SK-N-SH (cell line): ENCODE measurements at regions of chr6 and their contacts with region 1.

Region 1: DNA sequence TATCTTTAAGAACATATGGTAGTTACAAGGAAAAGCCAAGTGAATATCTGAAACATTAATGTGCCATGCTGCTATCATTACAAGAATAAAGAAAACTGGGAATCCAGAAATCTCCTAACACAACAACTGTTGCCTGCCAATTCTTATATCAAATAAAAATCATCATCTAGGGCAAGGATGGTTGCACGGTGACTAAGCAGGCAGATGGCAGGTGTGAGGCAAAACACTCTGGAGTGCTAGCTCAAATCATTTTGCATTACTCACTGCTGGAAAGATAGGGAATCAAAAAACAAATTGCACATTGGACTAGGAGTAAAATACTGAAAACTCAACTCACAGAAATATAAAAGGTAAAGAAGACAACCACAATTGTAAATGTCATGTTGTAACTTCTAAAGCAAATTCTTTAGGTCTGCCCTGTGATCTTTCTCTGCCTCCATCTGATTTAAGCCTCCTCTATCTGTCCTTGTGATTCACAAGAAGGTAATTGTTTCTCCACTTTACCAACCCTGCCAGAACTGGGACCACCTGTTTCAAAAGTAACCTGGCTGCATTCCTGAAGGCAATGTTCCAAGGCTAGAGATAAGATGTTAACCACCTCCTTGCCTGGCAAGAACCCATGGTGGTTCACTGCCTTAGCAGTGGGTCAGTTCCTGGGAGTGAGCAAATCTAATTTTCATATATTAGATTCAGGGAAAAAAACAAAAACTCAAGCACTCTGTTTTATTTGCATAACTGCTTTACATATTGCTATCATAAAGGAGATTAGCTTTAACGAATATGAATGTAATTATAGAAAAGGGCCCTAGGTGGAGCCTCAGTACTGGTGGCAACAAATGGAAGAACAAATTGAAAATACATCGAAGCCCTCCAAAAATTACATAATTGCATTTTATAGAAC is 33.1 kb upstream of the LCA5 start:
- DNase-seq: peak; percentile 54
- H3K4me3 ChIP-seq: peak overlapping the region in 1 of 2 experiments; percentile 27; a peak in 2 of 4 replicates
- H3K27ac ChIP-seq: peak overlapping the region in 1 of 2 experiments; percentile 43; a peak in 1 of 4 replicates
- H3K4me1 ChIP-seq: peaks cover 6 to 9% of the 10 kb centered on the region in 2 experiments; a peak in 3 of 4 replicates
- H3K27me3 ChIP-seq: no peaks in the 10 kb centered on the region
- CTCF ChIP-seq: peak; percentile 79
- EP300 ChIP-seq: no peak
- RAD21 ChIP-seq: peak; percentile 91

Region 2: DNA sequence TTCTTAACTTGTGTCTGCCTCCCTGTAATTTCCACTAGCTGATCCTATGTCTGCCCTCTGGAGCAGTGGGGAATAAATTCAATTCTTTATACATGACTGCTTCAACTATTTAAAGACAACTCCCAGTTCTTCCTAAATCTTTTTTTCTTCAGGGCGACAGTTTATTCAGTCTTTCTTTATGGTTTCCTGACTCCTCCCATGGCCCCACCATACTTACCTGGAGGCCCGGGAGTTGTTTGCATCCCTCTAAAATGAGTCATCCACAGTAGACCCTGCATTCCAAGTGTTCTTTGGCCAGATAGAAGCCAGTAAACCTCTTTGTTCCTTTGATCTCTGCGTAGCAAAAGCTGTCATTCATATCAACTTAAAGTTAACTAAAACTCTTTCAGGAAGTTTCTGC is 106.7 kb before region 1 on chr6:
- CTCF ChIA-PET with region 1: no interaction called
- POLR2A ChIA-PET with region 1: no interaction called
- DNase-seq: no peak
- H3K4me3 ChIP-seq: no peak overlapping the region
- H3K27ac ChIP-seq: no peak overlapping the region
- H3K4me1 ChIP-seq: peaks cover 0 to 14% of the 10 kb centered on the region in 2 experiments
- H3K27me3 ChIP-seq: no peaks in the 10 kb centered on the region
- CTCF ChIP-seq: no peak
- EP300 ChIP-seq: no peak
- RAD21 ChIP-seq: no peak

Region 3: GRCh38 chr6:79600812-79601609 is 30.6 kb after region 1 on chr6:
- CTCF ChIA-PET with region 1: interaction called, 17 read pairs
- POLR2A ChIA-PET with region 1: no interaction called
- DNase-seq: no peak
- H3K4me3 ChIP-seq: no peak overlapping the region
- H3K27ac ChIP-seq: no peak overlapping the region
- H3K4me1 ChIP-seq: peaks cover 0 to 1% of the 10 kb centered on the region in 2 experiments; a peak in 2 of 4 replicates
- H3K27me3 ChIP-seq: no peaks in the 10 kb centered on the region
- CTCF ChIP-seq: no peak
- EP300 ChIP-seq: no peak
- RAD21 ChIP-seq: no peak

Region 4: GRCh38 chr6:79672631-79673111 is 102.3 kb after region 1 on chr6:
- CTCF ChIA-PET with region 1: interaction called, 32 read pairs
- POLR2A ChIA-PET with region 1: no interaction called
- DNase-seq: peak; percentile 12
- H3K4me3 ChIP-seq: no peak overlapping the region
- H3K27ac ChIP-seq: no peak overlapping the region
- H3K4me1 ChIP-seq: peaks cover 4 to 6% of the 10 kb centered on the region in 2 experiments; a peak in 3 of 4 replicates
- H3K27me3 ChIP-seq: no peaks in the 10 kb centered on the region
- CTCF ChIP-seq: peak; percentile 69
- EP300 ChIP-seq: no peak
- RAD21 ChIP-seq: peak; percentile 79

Region 5: GRCh38 chr6:79713701-79714322 is 143.4 kb after region 1 on chr6:
- CTCF ChIA-PET with region 1: interaction called, 106 read pairs
- POLR2A ChIA-PET with region 1: no interaction called
- DNase-seq: peak; percentile 53
- H3K4me3 ChIP-seq: no peak overlapping the region; a peak in 1 of 4 replicates
- H3K27ac ChIP-seq: no peak overlapping the region
- H3K4me1 ChIP-seq: peaks cover 0 to 5% of the 10 kb centered on the region in 2 experiments; a peak in 1 of 4 replicates
- H3K27me3 ChIP-seq: no peaks in the 10 kb centered on the region
- CTCF ChIP-seq: peak; percentile 78
- EP300 ChIP-seq: no peak
- RAD21 ChIP-seq: peak; percentile 90

Region 6: GRCh38 chr6:79841577-79842375 is 271.4 kb after region 1 on chr6:
- CTCF ChIA-PET with region 1: no interaction called
- POLR2A ChIA-PET with region 1: no interaction called
- DNase-seq: no peak
- H3K4me3 ChIP-seq: no peak overlapping the region
- H3K27ac ChIP-seq: no peak overlapping the region
- H3K4me1 ChIP-seq: no peaks in the 10 kb centered on the region
- H3K27me3 ChIP-seq: no peaks in the 10 kb centered on the region
- CTCF ChIP-seq: no peak
- EP300 ChIP-seq: no peak
- RAD21 ChIP-seq: no peak

Region 7: GRCh38 chr6:79861023-79861422 is 290.6 kb after region 1 on chr6:
- CTCF ChIA-PET with region 1: interaction called, 12 read pairs
- POLR2A ChIA-PET with region 1: no interaction called
- DNase-seq: no peak
- H3K4me3 ChIP-seq: no peak overlapping the region
- H3K27ac ChIP-seq: no peak overlapping the region
- H3K4me1 ChIP-seq: peaks cover 0 to 8% of the 10 kb centered on the region in 2 experiments; a peak in 1 of 4 replicates
- H3K27me3 ChIP-seq: no peaks in the 10 kb centered on the region
- CTCF ChIP-seq: no peak
- EP300 ChIP-seq: no peak
- RAD21 ChIP-seq: no peak